ENCODE measurements at regions of chr3 and their contacts with region 1.

Region 1: DNA sequence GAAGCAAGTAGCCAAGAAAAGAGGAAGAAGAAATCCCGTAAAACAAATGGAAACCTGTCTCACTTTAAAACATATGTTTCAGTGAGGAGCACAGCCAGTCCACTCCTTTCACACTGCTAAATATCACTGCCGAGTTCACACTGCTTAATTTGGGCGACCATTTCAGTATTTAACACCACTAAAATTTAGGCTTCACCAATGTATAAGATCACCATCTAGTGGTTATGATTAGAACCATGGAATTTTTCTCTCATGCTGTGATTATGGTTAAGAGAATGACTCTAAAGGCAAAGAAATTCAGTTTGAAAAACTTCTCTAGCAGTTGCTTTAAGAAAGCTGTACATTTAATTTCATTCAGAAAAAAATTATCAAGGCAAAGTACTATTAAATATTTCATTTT is 16.6 kb downstream of the SLC4A7 start:
- DNase-seq: peak in 1 of 2 donors; percentile 64
- H3K4me3 ChIP-seq: no peak overlapping the region
- H3K27ac ChIP-seq: no peak overlapping the region
- H3K4me1 ChIP-seq: peaks cover 0 to 52% (median 24%) of the 10 kb centered on the region in 4 donors
- H3K27me3 ChIP-seq: no peaks in the 10 kb centered on the region
- CTCF ChIP-seq: peak in 5 of 7 experiments; percentile 33 to 63 (median 58)
- EP300 ChIP-seq: no peak
- POLR2A ChIP-seq: no peak

Region 2: DNA sequence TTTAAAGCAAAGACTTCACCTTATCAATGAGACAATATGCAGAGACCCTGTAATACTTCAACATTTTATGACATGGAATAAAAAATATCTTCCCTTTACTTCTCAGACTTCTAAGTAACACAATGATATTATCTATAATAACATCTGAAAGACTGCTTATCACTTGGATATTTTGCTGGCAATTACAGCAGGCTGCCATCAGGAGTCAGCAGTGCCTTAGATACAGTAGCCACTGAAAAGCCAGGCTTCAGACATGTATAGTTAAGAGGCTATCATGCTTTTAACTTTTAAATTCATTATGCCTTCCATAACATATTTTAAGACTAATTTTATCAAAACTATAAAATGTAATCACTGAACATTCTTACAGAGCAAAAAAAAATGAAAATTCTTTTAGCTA is 325.9 kb before region 1 on chr3:
- intact Hi-C with region 1: loop called (anchors 10 kb)
- DNase-seq: no peak
- H3K4me3 ChIP-seq: no peak overlapping the region
- H3K27ac ChIP-seq: no peak overlapping the region
- H3K4me1 ChIP-seq: peaks cover 0 to 3% (median 0%) of the 10 kb centered on the region in 4 donors
- H3K27me3 ChIP-seq: no peaks in the 10 kb centered on the region
- CTCF ChIP-seq: no peak
- EP300 ChIP-seq: no peak
- POLR2A ChIP-seq: no peak

Region 3: GRCh38 chr3:27507515-27508202 is 40.1 kb after region 1 on chr3:
- intact Hi-C with region 1: no loop called
- DNase-seq: peak; percentile 36 to 55
- H3K4me3 ChIP-seq: no peak overlapping the region
- H3K27ac ChIP-seq: no peak overlapping the region
- H3K4me1 ChIP-seq: peaks cover 0 to 19% (median 2%) of the 10 kb centered on the region in 4 donors
- H3K27me3 ChIP-seq: no peaks in the 10 kb centered on the region
- CTCF ChIP-seq: no peak
- EP300 ChIP-seq: no peak
- POLR2A ChIP-seq: no peak